ENCODE measurements at regions of chr17 and their contacts with region 1.

Region 1: GRCh38 chr17:50064258-50065001 is 8.5 kb downstream of the ITGA3 start:
- DNase-seq: peak; percentile 82
- H3K4me3 ChIP-seq: no peak overlapping the region
- H3K27ac ChIP-seq: peak overlapping the region; percentile 63
- H3K4me1 ChIP-seq: peaks cover 38% of the 10 kb centered on the region
- H3K27me3 ChIP-seq: no peaks in the 10 kb centered on the region
- CTCF ChIP-seq: no peak
- POLR2A ChIP-seq: no peak

Region 2: DNA sequence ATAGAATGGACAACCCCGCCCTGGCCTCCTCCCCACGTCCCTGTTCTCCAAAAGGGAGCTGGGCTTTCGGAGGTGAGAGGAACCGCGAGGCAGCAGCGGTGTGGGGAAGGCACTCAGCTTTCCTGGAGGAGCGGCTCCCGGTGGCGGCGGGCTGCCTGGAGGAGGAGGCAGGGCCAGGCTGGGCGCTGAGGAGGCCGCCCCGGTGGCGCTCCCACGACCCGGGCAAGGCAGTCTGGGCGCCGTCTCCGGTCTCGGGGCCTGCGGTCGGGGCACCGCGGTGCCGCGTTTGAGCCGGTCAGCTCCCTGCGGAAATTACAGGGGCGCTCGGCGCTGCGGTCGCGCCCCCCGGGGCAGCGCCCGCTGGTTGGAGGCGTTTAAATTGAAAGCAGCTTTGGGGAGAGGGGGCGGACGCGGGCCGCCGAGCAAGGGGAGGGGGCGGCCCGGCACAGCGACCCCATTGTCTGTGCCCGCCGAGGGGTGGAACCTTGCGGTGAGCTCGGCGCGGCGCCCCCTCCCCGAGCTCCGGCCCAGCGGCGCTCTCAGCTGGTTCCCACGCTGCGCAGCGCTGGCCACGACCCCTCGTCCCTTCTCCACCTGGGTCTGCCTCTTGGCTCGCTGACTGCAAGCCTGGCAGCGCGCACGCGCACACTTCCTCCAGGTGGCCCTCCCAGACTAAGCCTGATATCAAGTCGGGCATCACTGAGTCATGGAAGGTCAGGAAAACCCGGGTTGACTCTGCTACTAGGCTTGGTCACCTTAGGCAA is 154.2 kb before region 1 on chr17:
- CTCF ChIA-PET with region 1: no interaction called
- POLR2A ChIA-PET with region 1: no interaction called
- dilution Hi-C with region 1: no loop called
- intact Hi-C with region 1: no loop called
- DNase-seq: peak; percentile 2
- H3K4me3 ChIP-seq: no peak overlapping the region
- H3K27ac ChIP-seq: no peak overlapping the region
- H3K4me1 ChIP-seq: no peaks in the 10 kb centered on the region
- H3K27me3 ChIP-seq: peaks cover 71 to 78% of the 10 kb centered on the region in 2 experiments
- CTCF ChIP-seq: no peak
- POLR2A ChIP-seq: no peak

Region 3: DNA sequence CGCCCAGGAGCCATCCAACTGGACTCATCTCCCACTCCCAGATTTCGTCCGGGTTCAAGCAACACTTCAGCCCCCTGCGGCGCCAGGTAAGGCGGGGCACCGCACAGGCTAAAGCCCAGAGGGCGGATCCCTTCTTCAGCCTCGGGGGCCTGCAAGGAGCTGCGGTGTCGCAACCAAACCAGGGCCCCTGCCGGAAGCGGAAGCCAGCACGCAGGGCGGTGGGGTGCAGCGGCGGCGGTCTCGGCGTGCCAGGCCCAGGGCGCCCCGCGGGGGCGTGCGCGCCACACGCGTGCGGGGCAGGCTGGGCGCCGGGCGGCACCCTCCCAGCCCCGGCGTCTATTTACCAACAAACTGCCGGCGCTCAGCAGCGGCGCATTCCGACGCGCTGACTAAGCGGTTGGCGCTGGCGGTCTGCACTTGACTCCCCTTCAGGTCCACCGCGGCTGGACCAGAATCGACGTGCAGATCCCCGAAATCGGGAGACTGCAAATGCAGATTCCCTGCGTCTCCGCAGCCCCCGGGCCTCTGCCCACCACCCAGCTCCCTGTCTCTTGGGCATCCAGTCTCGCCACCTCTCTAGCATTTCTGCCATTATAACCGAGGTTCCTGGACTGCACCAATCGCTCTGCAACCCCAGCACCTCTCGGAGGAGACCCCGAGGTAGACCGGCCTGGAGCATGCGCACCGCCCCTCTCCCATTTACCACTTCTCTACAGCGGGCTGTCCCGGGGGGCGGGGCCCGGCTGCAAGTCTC is 95.9 kb before region 1 on chr17:
- CTCF ChIA-PET with region 1: no interaction called
- POLR2A ChIA-PET with region 1: no interaction called
- dilution Hi-C with region 1: no loop called
- intact Hi-C with region 1: no loop called
- DNase-seq: peak; percentile 38
- H3K4me3 ChIP-seq: peak overlapping the region in 1 of 3 experiments; percentile 16
- H3K27ac ChIP-seq: no peak overlapping the region
- H3K4me1 ChIP-seq: no peaks in the 10 kb centered on the region
- H3K27me3 ChIP-seq: peaks cover 92 to 96% of the 10 kb centered on the region in 2 experiments
- CTCF ChIP-seq: no peak
- POLR2A ChIP-seq: no peak

Region 4: GRCh38 chr17:50003911-50004310 is 60.5 kb before region 1 on chr17:
- CTCF ChIA-PET with region 1: no interaction called
- POLR2A ChIA-PET with region 1: no interaction called
- dilution Hi-C with region 1: no loop called
- intact Hi-C with region 1: no loop called
- DNase-seq: no peak
- H3K4me3 ChIP-seq: no peak overlapping the region
- H3K27ac ChIP-seq: no peak overlapping the region
- H3K4me1 ChIP-seq: no peaks in the 10 kb centered on the region
- H3K27me3 ChIP-seq: peaks cover 19 to 28% of the 10 kb centered on the region in 2 experiments
- CTCF ChIP-seq: no peak
- POLR2A ChIP-seq: no peak

Region 5: GRCh38 chr17:50079334-50080095 is 15.1 kb after region 1 on chr17:
- CTCF ChIA-PET with region 1: interaction called, 12 read pairs
- POLR2A ChIA-PET with region 1: no interaction called
- dilution Hi-C with region 1: no loop called
- intact Hi-C with region 1: no loop called
- DNase-seq: peak; percentile 17
- H3K4me3 ChIP-seq: no peak overlapping the region
- H3K27ac ChIP-seq: no peak overlapping the region
- H3K4me1 ChIP-seq: no peaks in the 10 kb centered on the region
- H3K27me3 ChIP-seq: no peaks in the 10 kb centered on the region
- CTCF ChIP-seq: peak; percentile 64 to 71
- POLR2A ChIP-seq: no peak

Measured in endothelial cell of umbilical vein (primary cell).